AG04450 (cell line): ENCODE measurements at regions of chr4 and their contacts with region 1.

Region 1: DNA sequence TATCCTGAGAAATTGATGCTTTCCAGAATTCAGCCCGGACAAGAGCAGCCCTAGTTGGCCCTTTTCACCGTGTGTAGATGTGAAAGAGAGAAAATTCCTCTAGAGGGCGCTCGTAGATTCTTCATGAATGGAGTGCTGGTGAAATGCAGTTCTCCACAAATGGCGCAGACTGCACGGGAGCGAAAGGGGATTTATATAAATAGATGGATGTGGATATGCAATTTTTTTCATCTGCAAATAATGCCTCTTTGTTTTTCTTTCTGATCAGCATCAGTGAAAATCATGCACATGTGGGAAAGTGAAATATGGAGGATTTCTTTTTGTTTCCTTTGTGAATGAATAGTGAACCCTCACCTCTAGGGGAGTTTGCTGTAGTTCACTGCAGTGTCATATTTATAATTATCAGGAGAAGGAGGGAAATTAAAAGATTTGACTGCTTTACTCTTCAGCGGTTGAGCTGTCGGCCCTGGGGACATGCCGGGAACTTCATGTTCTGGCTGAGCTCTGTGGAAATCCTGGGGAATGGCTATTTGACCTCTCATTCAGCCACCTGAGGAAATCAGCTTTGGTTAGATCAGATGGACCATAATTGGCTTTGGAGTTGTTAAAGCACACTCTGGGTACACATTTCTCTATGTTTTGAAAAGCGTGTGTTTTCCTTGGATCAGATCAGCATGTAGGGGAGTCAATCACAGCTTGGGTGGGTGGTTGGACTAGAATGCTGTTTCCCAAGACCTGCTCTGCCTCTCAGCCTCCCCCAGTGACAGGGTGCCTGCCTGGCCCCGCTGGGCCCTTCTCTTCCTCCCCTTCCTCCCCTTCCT is 115.0 kb upstream of the SHISA3 start:
- DNase-seq: peak; percentile 29
- H3K4me3 ChIP-seq: no peak overlapping the region
- H3K27ac ChIP-seq: no peak overlapping the region
- H3K27me3 ChIP-seq: no peaks in the 10 kb centered on the region
- CTCF ChIP-seq: peak; percentile 69

Region 2: GRCh38 chr4:41475402-41475801 is 806.9 kb before region 1 on chr4:
- CTCF ChIA-PET with region 1: no interaction called
- POLR2A ChIA-PET with region 1: no interaction called
- DNase-seq: no peak
- H3K4me3 ChIP-seq: no peak overlapping the region
- H3K27ac ChIP-seq: no peak overlapping the region
- H3K27me3 ChIP-seq: no peaks in the 10 kb centered on the region
- CTCF ChIP-seq: no peak

Region 3: DNA sequence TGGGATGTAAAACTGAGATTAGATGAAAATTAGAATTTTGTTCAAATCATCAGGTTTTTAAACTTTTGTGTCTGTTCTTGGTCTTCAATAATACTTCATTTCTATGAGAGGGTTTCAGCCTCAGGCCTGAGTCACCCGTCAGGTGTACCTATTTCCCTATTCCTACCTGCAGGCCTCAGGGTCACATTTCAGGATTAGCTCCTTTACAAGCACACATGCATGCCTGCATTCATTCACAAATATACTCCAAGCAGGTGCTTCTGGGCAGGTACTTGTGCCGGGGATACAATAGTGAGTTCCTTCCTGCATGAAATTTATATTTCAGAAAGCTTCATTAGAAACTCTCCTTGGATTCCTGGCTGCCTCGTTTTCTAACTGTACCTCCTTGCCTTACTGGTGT is 229.9 kb after region 1 on chr4:
- CTCF ChIA-PET with region 1: interaction called, 19 read pairs
- POLR2A ChIA-PET with region 1: no interaction called
- DNase-seq: no peak
- H3K4me3 ChIP-seq: no peak overlapping the region
- H3K27ac ChIP-seq: no peak overlapping the region
- H3K27me3 ChIP-seq: no peaks in the 10 kb centered on the region
- CTCF ChIP-seq: no peak

Region 4: GRCh38 chr4:42519803-42520417 is 237.6 kb after region 1 on chr4:
- CTCF ChIA-PET with region 1: interaction called, 89 read pairs
- POLR2A ChIA-PET with region 1: no interaction called
- DNase-seq: peak; percentile 7
- H3K4me3 ChIP-seq: no peak overlapping the region
- H3K27ac ChIP-seq: no peak overlapping the region
- H3K27me3 ChIP-seq: no peaks in the 10 kb centered on the region
- CTCF ChIP-seq: peak; percentile 70

Region 5: DNA sequence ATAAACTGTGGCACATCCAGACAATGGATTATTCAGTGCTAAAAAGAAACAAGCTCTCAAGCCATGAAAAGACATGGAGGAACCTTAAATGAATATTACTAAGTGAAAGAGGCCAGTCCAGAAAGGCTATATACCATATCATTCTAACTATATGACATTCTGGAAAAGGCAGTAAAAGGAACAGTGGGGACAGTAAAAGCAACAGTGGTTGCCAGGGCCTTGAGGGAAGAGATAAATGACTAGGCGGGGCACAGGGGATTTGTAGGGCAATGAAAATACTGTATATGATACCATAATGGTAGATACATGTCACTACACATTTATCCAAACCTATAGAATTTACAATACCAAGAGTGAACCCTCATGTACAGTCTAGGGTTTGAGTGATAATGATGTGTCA is 259.4 kb after region 1 on chr4:
- CTCF ChIA-PET with region 1: no interaction called
- POLR2A ChIA-PET with region 1: no interaction called
- DNase-seq: no peak
- H3K4me3 ChIP-seq: no peak overlapping the region
- H3K27ac ChIP-seq: no peak overlapping the region
- H3K27me3 ChIP-seq: no peaks in the 10 kb centered on the region
- CTCF ChIP-seq: no peak